B cell (primary cell): ENCODE measurements at regions of chr2 and their contacts with region 1.

Region 1: GRCh38 chr2:181457121-181457740 is at the start of gene ITGA4:
- DNase-seq: no peak
- ATAC-seq: peak; percentile 79
- H3K4me3 ChIP-seq: peak within 1 kb of the TSS; percentile 90 to 97 (median 93)
- H3K4me3 Mint-ChIP-seq: peak within 1 kb of the TSS; percentile 90
- H3K27ac ChIP-seq: peak within 1 kb of the TSS; percentile 95 to 100
- H3K27ac Mint-ChIP-seq: peak within 1 kb of the TSS; percentile 99
- H3K4me1 ChIP-seq: peaks cover 33 to 38% of the 10 kb centered on the region in 2 donors
- H3K4me1 Mint-ChIP-seq: peaks cover 59% of the 10 kb centered on the region
- H3K27me3 ChIP-seq: no peaks in the 10 kb centered on the region
- H3K27me3 Mint-ChIP-seq: no peaks in the 10 kb centered on the region
- CTCF ChIP-seq: peak; percentile 81
- total RNA-seq, gene ITGA4: 169 and 174 TPM in 2 replicates

Region 2: GRCh38 chr2:181077128-181077709 is 380.0 kb before region 1 on chr2:
- CTCF ChIA-PET with region 1: no interaction called
- POLR2A ChIA-PET with region 1: no interaction called
- intact Hi-C with region 1: loop called (anchors 1 kb)
- DNase-seq: peak; percentile 70
- ATAC-seq: peak; percentile 65
- H3K4me3 ChIP-seq: no peak overlapping the region
- H3K4me3 Mint-ChIP-seq: no peak overlapping the region
- H3K27ac ChIP-seq: no peak overlapping the region
- H3K27ac Mint-ChIP-seq: no peak overlapping the region
- H3K4me1 ChIP-seq: no peaks in the 10 kb centered on the region
- H3K4me1 Mint-ChIP-seq: peaks cover 5% of the 10 kb centered on the region
- H3K27me3 ChIP-seq: no peaks in the 10 kb centered on the region
- H3K27me3 Mint-ChIP-seq: no peaks in the 10 kb centered on the region
- CTCF ChIP-seq: peak; percentile 85

Region 3: DNA sequence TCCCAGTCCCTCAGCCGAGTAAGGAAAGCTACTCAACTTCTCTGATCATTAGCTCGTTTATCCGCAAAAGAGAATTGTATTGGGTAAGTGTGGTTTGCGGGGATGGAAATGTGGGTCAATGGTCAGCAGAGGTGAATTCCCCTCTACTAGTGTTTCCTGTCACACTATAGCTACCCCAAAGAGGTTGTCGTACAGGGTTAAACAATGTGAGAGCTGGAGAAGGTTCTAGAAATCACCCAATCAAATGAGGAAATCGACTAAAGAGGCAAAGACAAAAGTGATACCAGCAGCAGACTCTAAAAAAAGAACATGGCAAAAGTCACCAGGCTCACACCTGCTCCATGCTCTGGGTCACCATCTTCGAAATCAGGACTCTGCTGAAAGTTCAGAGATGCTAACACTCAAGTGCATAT is 144.7 kb before region 1 on chr2:
- CTCF ChIA-PET with region 1: interaction called, 252 read pairs
- POLR2A ChIA-PET with region 1: interaction called, 15 read pairs
- intact Hi-C with region 1: loop called (anchors 1 kb)
- DNase-seq: peak; percentile 80
- ATAC-seq: peak; percentile 59
- H3K4me3 ChIP-seq: peak overlapping the region in 4 of 5 experiments; percentile 7 to 38 (median 16)
- H3K4me3 Mint-ChIP-seq: peak overlapping the region; percentile 73
- H3K27ac ChIP-seq: peak overlapping the region; percentile 93 to 96
- H3K27ac Mint-ChIP-seq: peak overlapping the region; percentile 92
- H3K4me1 ChIP-seq: peaks cover 54 to 65% of the 10 kb centered on the region in 2 donors
- H3K4me1 Mint-ChIP-seq: peaks cover 53% of the 10 kb centered on the region
- H3K27me3 ChIP-seq: no peaks in the 10 kb centered on the region
- H3K27me3 Mint-ChIP-seq: no peaks in the 10 kb centered on the region
- CTCF ChIP-seq: no peak

Region 4: GRCh38 chr2:181419129-181419855 is 37.9 kb before region 1 on chr2:
- CTCF ChIA-PET with region 1: interaction called, 5 read pairs
- POLR2A ChIA-PET with region 1: no interaction called
- intact Hi-C with region 1: loop called (anchors 2 kb)
- DNase-seq: peak; percentile 83
- ATAC-seq: peak; percentile 77
- H3K4me3 ChIP-seq: no peak overlapping the region
- H3K4me3 Mint-ChIP-seq: peak overlapping the region; percentile 55
- H3K27ac ChIP-seq: peak overlapping the region; percentile 93 to 98
- H3K27ac Mint-ChIP-seq: peak overlapping the region; percentile 86
- H3K4me1 ChIP-seq: peaks cover 44 to 51% of the 10 kb centered on the region in 2 donors
- H3K4me1 Mint-ChIP-seq: peaks cover 65% of the 10 kb centered on the region
- H3K27me3 ChIP-seq: no peaks in the 10 kb centered on the region
- H3K27me3 Mint-ChIP-seq: no peaks in the 10 kb centered on the region
- CTCF ChIP-seq: no peak

Region 5: DNA sequence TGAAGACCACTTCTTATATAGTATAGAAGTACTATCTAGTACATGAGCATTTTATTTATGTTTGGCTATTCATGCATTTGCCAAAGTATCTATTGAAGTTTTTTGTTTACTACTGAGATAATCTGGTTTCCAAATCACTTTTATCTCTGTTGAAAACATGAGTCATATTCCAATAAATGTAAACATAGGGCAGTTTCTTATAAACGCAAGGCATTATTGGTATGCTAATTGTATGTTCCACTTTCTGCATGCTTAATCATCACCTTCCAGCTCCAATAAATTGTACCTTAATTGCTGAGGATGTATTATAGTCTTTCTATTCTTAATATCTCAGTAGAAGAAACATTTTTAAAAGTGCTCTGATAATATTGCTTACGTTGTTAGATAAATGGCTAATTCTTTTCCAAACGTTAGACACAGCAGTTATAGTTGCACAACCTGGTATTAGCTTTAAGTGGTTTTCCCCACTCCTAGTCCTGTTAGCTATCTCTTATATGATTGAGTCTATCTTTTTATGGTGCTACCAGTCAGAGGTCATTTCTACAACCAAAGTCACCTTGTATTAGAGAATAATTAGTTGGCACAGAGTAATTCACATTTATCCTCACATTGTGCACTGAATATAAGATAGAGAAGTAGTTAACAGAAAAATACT is 17.1 kb after region 1 on chr2:
- CTCF ChIA-PET with region 1: interaction called, 77 read pairs
- POLR2A ChIA-PET with region 1: no interaction called
- intact Hi-C with region 1: no loop called
- DNase-seq: no peak
- ATAC-seq: no peak
- H3K4me3 ChIP-seq: no peak overlapping the region
- H3K4me3 Mint-ChIP-seq: no peak overlapping the region
- H3K27ac ChIP-seq: peak overlapping the region in 1 of 2 donors; percentile 68
- H3K27ac Mint-ChIP-seq: no peak overlapping the region
- H3K4me1 ChIP-seq: peaks cover 28 to 34% of the 10 kb centered on the region in 2 donors
- H3K4me1 Mint-ChIP-seq: peaks cover 47% of the 10 kb centered on the region
- H3K27me3 ChIP-seq: no peaks in the 10 kb centered on the region
- H3K27me3 Mint-ChIP-seq: no peaks in the 10 kb centered on the region
- CTCF ChIP-seq: no peak